Activated naive CD4-positive, alpha-beta T cell treated with anti-CD3 and anti-CD28 coated beads for 36 hours (primary cell): ENCODE measurements at regions of chr6 and their contacts with region 1.

Region 1: GRCh38 chr6:15184441-15184861 is 61.4 kb upstream of the JARID2 start:
- DNase-seq: peak; percentile 78
- H3K4me3 Mint-ChIP-seq: no peak overlapping the region
- H3K27ac Mint-ChIP-seq: peak overlapping the region; percentile 99
- H3K4me1 Mint-ChIP-seq: peaks cover 25% of the 10 kb centered on the region
- H3K27me3 Mint-ChIP-seq: no peaks in the 10 kb centered on the region

Region 2: DNA sequence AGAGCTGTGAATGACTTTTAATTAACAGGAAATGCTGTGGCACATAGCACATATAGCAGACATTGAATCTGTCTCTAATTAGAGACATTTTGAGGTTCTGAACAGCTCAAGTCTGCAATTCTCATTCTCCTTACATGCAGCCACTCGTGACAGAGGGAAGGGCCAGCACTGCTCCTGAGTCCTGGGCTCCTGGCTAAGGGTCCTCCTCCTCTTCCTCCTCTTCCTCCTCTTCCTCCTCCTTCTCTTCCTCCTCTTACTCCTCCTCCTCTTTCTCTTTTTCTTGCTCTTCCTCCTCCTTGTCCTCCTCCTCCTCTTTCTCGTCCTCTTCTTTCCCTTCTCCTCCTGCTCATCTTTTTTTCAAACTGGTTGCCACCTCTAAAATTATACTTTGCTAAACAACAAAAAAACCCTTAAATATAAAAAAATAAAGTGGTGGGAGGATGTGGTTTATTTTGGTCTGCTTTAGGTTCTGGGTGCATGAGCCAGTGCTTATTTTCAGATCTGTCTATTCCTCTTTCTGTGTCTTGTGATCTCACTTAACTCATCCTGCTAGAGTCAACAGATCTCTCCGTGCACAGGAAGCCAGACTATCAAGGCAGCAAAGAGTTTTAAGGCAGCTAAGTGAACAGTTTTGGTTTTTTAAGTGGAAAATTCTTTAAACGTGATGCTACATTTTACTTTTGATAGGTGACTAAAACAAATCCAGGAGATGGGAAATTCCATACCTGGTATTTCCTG is 907.6 kb before region 1 on chr6:
- CTCF ChIA-PET with region 1: no interaction called
- intact Hi-C with region 1: loop called (anchors 1 kb)
- DNase-seq: peak; percentile 63
- H3K4me3 Mint-ChIP-seq: peak overlapping the region; percentile 40
- H3K27ac Mint-ChIP-seq: peak overlapping the region; percentile 85
- H3K4me1 Mint-ChIP-seq: peaks cover 37% of the 10 kb centered on the region
- H3K27me3 Mint-ChIP-seq: no peaks in the 10 kb centered on the region

Region 3: GRCh38 chr6:14542670-14543366 is 641.6 kb before region 1 on chr6:
- CTCF ChIA-PET with region 1: no interaction called
- intact Hi-C with region 1: loop called (anchors 1 kb)
- DNase-seq: peak; percentile 92
- H3K4me3 Mint-ChIP-seq: no peak overlapping the region
- H3K27ac Mint-ChIP-seq: peak overlapping the region; percentile 64
- H3K4me1 Mint-ChIP-seq: peaks cover 24% of the 10 kb centered on the region
- H3K27me3 Mint-ChIP-seq: no peaks in the 10 kb centered on the region

Region 4: GRCh38 chr6:15023448-15023847 is 161.0 kb before region 1 on chr6:
- CTCF ChIA-PET with region 1: no interaction called
- intact Hi-C with region 1: loop called (anchors 1 kb)
- DNase-seq: peak; percentile 78
- H3K4me3 Mint-ChIP-seq: no peak overlapping the region
- H3K27ac Mint-ChIP-seq: peak overlapping the region; percentile 84
- H3K4me1 Mint-ChIP-seq: peaks cover 20% of the 10 kb centered on the region
- H3K27me3 Mint-ChIP-seq: peaks cover 3% of the 10 kb centered on the region

Region 5: DNA sequence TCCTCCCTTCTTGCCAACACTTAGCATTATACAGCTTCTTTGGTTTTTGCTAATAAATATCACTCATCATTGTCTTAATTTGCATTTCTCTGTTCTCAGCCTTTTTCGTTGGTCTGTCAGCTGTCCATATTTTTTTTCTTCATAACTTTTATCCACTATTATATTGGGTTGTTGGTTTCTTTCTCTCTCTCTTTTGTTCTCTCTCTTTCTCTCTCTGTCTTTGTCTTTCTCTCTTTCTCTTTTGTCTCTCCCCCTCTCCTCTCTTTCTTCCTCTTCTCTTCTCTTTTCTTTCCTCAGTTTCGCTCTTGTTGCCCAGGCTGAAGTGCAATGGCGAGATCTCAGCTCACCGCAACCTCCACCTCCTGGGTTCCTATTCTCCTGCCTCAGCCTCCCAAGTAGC is 97.9 kb after region 1 on chr6:
- CTCF ChIA-PET with region 1: no interaction called
- intact Hi-C with region 1: no loop called
- DNase-seq: no peak
- H3K4me3 Mint-ChIP-seq: no peak overlapping the region
- H3K27ac Mint-ChIP-seq: no peak overlapping the region
- H3K4me1 Mint-ChIP-seq: peaks cover 69% of the 10 kb centered on the region
- H3K27me3 Mint-ChIP-seq: no peaks in the 10 kb centered on the region

Region 6: GRCh38 chr6:15317934-15318902 is 133.8 kb after region 1 on chr6:
- CTCF ChIA-PET with region 1: no interaction called
- intact Hi-C with region 1: loop called (anchors 1 kb)
- DNase-seq: peak; percentile 72
- H3K4me3 Mint-ChIP-seq: peak overlapping the region; percentile 57
- H3K27ac Mint-ChIP-seq: peak overlapping the region; percentile 84
- H3K4me1 Mint-ChIP-seq: peaks cover 93% of the 10 kb centered on the region
- H3K27me3 Mint-ChIP-seq: no peaks in the 10 kb centered on the region

Region 7: GRCh38 chr6:15479761-15480160 is 295.3 kb after region 1 on chr6:
- CTCF ChIA-PET with region 1: no interaction called
- intact Hi-C with region 1: loop called (anchors 2 kb)
- DNase-seq: no peak
- H3K4me3 Mint-ChIP-seq: no peak overlapping the region
- H3K27ac Mint-ChIP-seq: no peak overlapping the region
- H3K4me1 Mint-ChIP-seq: peaks cover 59% of the 10 kb centered on the region
- H3K27me3 Mint-ChIP-seq: no peaks in the 10 kb centered on the region

Region 8: GRCh38 chr6:15595461-15596173 is 411.2 kb after region 1 on chr6:
- CTCF ChIA-PET with region 1: no interaction called
- intact Hi-C with region 1: no loop called
- DNase-seq: no peak
- H3K4me3 Mint-ChIP-seq: no peak overlapping the region
- H3K27ac Mint-ChIP-seq: no peak overlapping the region
- H3K4me1 Mint-ChIP-seq: peaks cover 37% of the 10 kb centered on the region
- H3K27me3 Mint-ChIP-seq: no peaks in the 10 kb centered on the region